Heart right ventricle (tissue), 16 donors: ENCODE measurements at regions of chr12 and their contacts with region 1.

Region 1: DNA sequence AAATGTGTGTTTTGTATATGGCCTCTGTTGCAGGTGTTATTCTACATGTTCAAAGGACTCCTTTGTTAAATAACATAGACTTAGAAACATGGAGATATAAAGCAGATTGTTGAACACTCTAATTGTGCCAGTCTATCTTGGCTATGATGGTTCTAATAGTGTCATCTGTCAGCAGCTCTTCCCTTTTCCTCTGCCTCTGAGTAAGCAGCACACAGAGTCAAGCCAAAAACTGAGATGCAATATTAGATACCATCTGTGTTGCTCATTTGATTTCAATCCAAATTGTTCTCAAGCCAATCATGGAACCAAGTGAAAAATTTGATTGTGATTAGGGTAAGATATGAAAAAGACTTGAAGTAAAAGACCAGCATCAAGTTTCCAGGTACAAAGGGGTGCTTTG is 871.1 kb upstream of the MGAT4C start:
- DNase-seq: no peak
- ATAC-seq: no peak
- H3K4me3 ChIP-seq: no peak overlapping the region
- H3K27ac ChIP-seq: no peak overlapping the region
- H3K4me1 ChIP-seq: no peaks in the 10 kb centered on the region
- H3K27me3 ChIP-seq: no peaks in the 10 kb centered on the region
- CTCF ChIP-seq: no peak

Region 2: DNA sequence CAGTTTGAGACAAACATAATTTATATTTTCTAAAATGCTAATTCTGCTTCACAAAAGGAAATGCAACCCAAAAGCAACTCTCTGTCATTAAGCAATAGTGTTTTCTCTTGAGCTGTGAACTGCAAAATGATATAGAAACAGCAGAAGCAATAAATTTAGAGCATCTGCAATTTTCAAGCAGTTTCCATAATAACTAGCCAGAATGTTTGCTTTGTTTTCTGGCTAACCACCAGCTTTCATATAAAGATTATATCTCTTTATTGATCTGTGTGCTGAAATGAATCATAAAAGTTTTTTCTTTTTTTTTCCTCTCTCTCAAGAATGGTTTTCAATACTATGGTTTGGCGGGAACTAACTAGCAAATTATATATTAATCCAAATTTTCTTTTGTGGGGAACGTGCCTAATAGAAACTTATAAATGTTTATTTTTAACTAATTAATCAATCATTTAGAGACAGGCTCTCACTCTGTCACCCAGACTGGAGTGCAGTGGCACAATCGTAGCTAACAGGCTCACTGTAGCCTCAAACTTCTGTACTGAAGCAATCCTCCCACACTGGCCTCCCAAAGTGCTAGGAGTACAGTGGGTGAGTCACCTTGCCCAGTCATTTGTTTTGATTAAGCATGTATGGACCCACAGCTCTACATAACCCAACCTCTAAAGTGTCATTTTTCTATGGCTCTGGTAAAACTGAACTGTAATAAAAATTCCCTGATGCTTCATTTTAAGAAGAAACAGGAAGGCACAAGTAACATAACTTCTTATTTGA is 41.0 kb before region 1 on chr12:
- intact Hi-C with region 1: no loop called
- DNase-seq: no peak
- ATAC-seq: no peak
- H3K4me3 ChIP-seq: no peak overlapping the region
- H3K27ac ChIP-seq: no peak overlapping the region
- H3K4me1 ChIP-seq: no peaks in the 10 kb centered on the region
- H3K27me3 ChIP-seq: no peaks in the 10 kb centered on the region
- CTCF ChIP-seq: no peak

Region 3: GRCh38 chr12:87382959-87383566 is 255.8 kb after region 1 on chr12:
- intact Hi-C with region 1: no loop called
- DNase-seq: no peak
- ATAC-seq: no peak
- H3K4me3 ChIP-seq: no peak overlapping the region
- H3K27ac ChIP-seq: no peak overlapping the region
- H3K4me1 ChIP-seq: no peaks in the 10 kb centered on the region
- H3K27me3 ChIP-seq: no peaks in the 10 kb centered on the region
- CTCF ChIP-seq: no peak

Region 4: GRCh38 chr12:87529413-87529812 is 402.1 kb after region 1 on chr12:
- intact Hi-C with region 1: loop called in 1 of 10 experiments (anchors 10 kb)
- DNase-seq: no peak
- ATAC-seq: no peak
- H3K4me3 ChIP-seq: no peak overlapping the region
- H3K27ac ChIP-seq: no peak overlapping the region
- H3K4me1 ChIP-seq: no peaks in the 10 kb centered on the region
- H3K27me3 ChIP-seq: no peaks in the 10 kb centered on the region
- CTCF ChIP-seq: no peak